B cell (primary cell): ENCODE measurements at regions of chr18 and their contacts with region 1.

Region 1: GRCh38 chr18:76492669-76493212 is 2.3 kb downstream of the ZNF516 start:
- DNase-seq: peak; percentile 99
- ATAC-seq: peak; percentile 74
- H3K4me3 ChIP-seq: peak overlapping the region; percentile 62 to 97 (median 77)
- H3K4me3 Mint-ChIP-seq: peak overlapping the region; percentile 95
- H3K27ac ChIP-seq: peak overlapping the region; percentile 67 to 69
- H3K27ac Mint-ChIP-seq: peak overlapping the region; percentile 94
- H3K4me1 ChIP-seq: peaks cover 18 to 40% of the 10 kb centered on the region in 2 donors
- H3K4me1 Mint-ChIP-seq: peaks cover 56% of the 10 kb centered on the region
- H3K27me3 ChIP-seq: peaks cover 0 to 10% (median 3%) of the 10 kb centered on the region in 4 experiments
- H3K27me3 Mint-ChIP-seq: peaks cover 21% of the 10 kb centered on the region
- CTCF ChIP-seq: no peak

Region 2: GRCh38 chr18:75209129-75209950 is 1283.4 kb before region 1 on chr18 and contains the start of gene PTGR3:
- CTCF ChIA-PET with region 1: no interaction called
- POLR2A ChIA-PET with region 1: no interaction called
- intact Hi-C with region 1: loop called (anchors 10 kb)
- DNase-seq: peak; percentile 81
- ATAC-seq: peak; percentile 60
- H3K4me3 ChIP-seq: peak within 1 kb of the TSS; percentile 73 to 90 (median 84)
- H3K4me3 Mint-ChIP-seq: peak within 1 kb of the TSS; percentile 98
- H3K27ac ChIP-seq: peak within 1 kb of the TSS; percentile 51 to 80
- H3K27ac Mint-ChIP-seq: peak within 1 kb of the TSS; percentile 93
- H3K4me1 ChIP-seq: peaks cover 35 to 44% of the 10 kb centered on the region in 2 donors
- H3K4me1 Mint-ChIP-seq: peaks cover 59% of the 10 kb centered on the region
- H3K27me3 ChIP-seq: peaks cover 0 to 5% (median 2%) of the 10 kb centered on the region in 4 experiments
- H3K27me3 Mint-ChIP-seq: peaks cover 21% of the 10 kb centered on the region
- CTCF ChIP-seq: no peak
- total RNA-seq, gene PTGR3: 30.2 and 32.6 TPM in 2 replicates

Region 3: DNA sequence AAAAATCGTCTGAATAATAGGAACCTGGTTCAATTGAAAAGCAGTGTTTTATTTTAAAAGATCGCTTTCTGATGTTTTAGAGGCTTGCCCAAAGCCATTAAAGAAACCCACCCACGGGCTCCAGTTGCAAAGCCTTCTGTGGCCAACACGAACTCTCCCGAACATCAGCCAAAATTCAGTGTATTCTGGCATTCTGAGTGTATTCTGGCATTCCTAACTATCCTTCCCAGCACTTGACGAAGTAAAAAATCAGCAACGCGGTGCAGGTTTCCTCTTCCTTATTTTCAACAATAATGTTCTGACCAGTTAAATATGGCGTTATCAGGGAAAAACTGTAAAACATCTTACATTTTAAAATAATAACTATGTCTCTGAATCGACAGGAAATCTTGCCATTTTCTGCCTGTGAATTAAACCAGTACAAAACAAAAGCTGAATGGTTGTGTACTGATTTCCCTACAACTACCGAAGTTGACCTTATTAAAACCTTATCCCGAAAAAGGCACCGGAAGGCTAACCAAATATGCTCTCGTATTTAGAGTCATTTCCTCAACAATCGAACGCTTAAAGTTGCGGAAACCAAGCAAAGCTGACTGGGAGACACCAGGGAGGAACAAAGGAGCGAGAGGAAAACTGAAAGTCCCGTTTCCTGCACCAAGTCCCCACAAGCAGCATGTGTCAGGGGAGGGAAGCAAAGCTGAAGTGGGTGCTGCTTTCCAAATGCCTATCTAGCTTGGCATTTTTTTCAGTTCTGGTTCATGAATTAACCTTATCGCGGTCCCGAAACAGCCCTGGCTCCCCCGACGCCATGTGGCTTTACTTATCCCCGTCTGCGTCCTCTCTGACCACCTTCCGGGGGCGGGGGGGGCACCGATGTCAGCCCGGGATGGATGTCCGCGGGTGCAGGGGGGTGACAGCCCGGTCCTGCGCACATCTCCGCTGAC is 42.0 kb before region 1 on chr18:
- CTCF ChIA-PET with region 1: no interaction called
- POLR2A ChIA-PET with region 1: no interaction called
- intact Hi-C with region 1: no loop called
- DNase-seq: peak; percentile 35
- ATAC-seq: peak; percentile 31
- H3K4me3 ChIP-seq: peak overlapping the region; percentile 50 to 70 (median 60)
- H3K4me3 Mint-ChIP-seq: peak overlapping the region; percentile 95
- H3K27ac ChIP-seq: peak overlapping the region in 1 of 2 donors; percentile 54
- H3K27ac Mint-ChIP-seq: no peak overlapping the region
- H3K4me1 ChIP-seq: peaks cover 25 to 29% of the 10 kb centered on the region in 2 donors
- H3K4me1 Mint-ChIP-seq: peaks cover 45% of the 10 kb centered on the region
- H3K27me3 ChIP-seq: no peaks in the 10 kb centered on the region
- H3K27me3 Mint-ChIP-seq: no peaks in the 10 kb centered on the region
- CTCF ChIP-seq: no peak

Region 4: GRCh38 chr18:76553715-76554546 is 61.2 kb after region 1 on chr18:
- CTCF ChIA-PET with region 1: no interaction called
- POLR2A ChIA-PET with region 1: no interaction called
- intact Hi-C with region 1: no loop called
- DNase-seq: no peak
- ATAC-seq: no peak
- H3K4me3 ChIP-seq: no peak overlapping the region
- H3K4me3 Mint-ChIP-seq: no peak overlapping the region
- H3K27ac ChIP-seq: no peak overlapping the region
- H3K27ac Mint-ChIP-seq: no peak overlapping the region
- H3K4me1 ChIP-seq: no peaks in the 10 kb centered on the region
- H3K4me1 Mint-ChIP-seq: no peaks in the 10 kb centered on the region
- H3K27me3 ChIP-seq: no peaks in the 10 kb centered on the region
- H3K27me3 Mint-ChIP-seq: peaks cover 8% of the 10 kb centered on the region
- CTCF ChIP-seq: no peak

Region 5: GRCh38 chr18:76822510-76823160 is 329.9 kb after region 1 on chr18 and contains the start of gene ZNF236:
- CTCF ChIA-PET with region 1: no interaction called
- POLR2A ChIA-PET with region 1: no interaction called
- intact Hi-C with region 1: loop called (anchors 5 kb)
- DNase-seq: peak; percentile 89
- ATAC-seq: peak; percentile 60
- H3K4me3 ChIP-seq: peak within 1 kb of the TSS; percentile 75 to 98 (median 95)
- H3K4me3 Mint-ChIP-seq: peak within 1 kb of the TSS; percentile 95
- H3K27ac ChIP-seq: peak within 1 kb of the TSS; percentile 85 to 90
- H3K27ac Mint-ChIP-seq: peak within 1 kb of the TSS; percentile 97
- H3K4me1 ChIP-seq: peaks cover 19 to 45% of the 10 kb centered on the region in 2 donors
- H3K4me1 Mint-ChIP-seq: peaks cover 60% of the 10 kb centered on the region
- H3K27me3 ChIP-seq: no peaks in the 10 kb centered on the region
- H3K27me3 Mint-ChIP-seq: no peaks in the 10 kb centered on the region
- CTCF ChIP-seq: no peak
- total RNA-seq, gene ZNF236: 39.2 and 39.5 TPM in 2 replicates

Region 6: GRCh38 chr18:76963936-76964335 is 471.2 kb after region 1 on chr18:
- CTCF ChIA-PET with region 1: no interaction called
- POLR2A ChIA-PET with region 1: no interaction called
- intact Hi-C with region 1: loop called (anchors 10 kb)
- DNase-seq: peak; percentile 65
- ATAC-seq: no peak
- H3K4me3 ChIP-seq: peak overlapping the region in 2 of 5 experiments; percentile 18 to 44
- H3K4me3 Mint-ChIP-seq: peak overlapping the region; percentile 71
- H3K27ac ChIP-seq: peak overlapping the region; percentile 26 to 93
- H3K27ac Mint-ChIP-seq: peak overlapping the region; percentile 94
- H3K4me1 ChIP-seq: peaks cover 63 to 67% of the 10 kb centered on the region in 2 donors
- H3K4me1 Mint-ChIP-seq: peaks cover 35% of the 10 kb centered on the region
- H3K27me3 ChIP-seq: no peaks in the 10 kb centered on the region
- H3K27me3 Mint-ChIP-seq: no peaks in the 10 kb centered on the region
- CTCF ChIP-seq: no peak